ENCODE measurements at regions of chr14 and their contacts with region 1.

Region 1: GRCh38 chr14:77212943-77213678 is 31.5 kb downstream of the TMEM63C start:
- DNase-seq: no peak
- H3K4me3 ChIP-seq: no peak overlapping the region
- CTCF ChIP-seq: no peak
- POLR2A ChIP-seq: no peak

Region 2: DNA sequence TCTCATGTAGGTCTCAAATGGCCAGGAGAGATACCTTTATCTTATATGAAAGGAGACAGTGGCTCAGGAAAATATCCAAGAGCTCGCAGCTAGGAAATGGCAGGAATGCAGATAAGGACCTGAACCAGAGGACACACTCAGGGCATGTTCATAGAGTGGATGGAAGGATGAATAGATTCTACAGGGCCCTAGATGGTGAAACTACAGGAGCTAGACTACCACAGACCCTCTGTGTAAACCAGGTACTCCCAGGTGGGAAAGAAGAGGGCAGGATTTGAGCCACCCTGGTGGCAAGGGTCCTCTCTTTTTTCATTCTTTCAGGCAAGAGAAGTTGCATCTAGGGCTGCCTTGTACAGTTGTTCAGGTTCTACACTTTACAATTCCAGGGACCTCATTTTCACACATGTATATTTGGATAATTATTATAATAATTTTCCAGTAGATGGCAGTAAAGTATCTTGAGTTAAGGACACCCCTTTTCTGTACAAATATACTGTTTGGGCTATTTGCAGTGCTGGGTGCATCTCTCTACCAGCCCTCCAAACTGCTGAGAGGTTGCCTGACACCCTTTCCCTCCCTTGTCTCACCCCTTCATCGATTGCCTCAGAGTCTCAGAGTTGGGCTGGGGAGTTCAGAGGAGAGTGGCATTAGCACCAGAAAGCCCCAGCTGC is 61.1 kb before region 1 on chr14:
- intact Hi-C with region 1: loop called (anchors 10 kb)
- DNase-seq: no peak
- H3K4me3 ChIP-seq: no peak overlapping the region
- CTCF ChIP-seq: no peak
- POLR2A ChIP-seq: no peak

Region 3: GRCh38 chr14:78029601-78030372 is 816.7 kb after region 1 on chr14:
- intact Hi-C with region 1: no loop called
- DNase-seq: no peak
- H3K4me3 ChIP-seq: no peak overlapping the region
- CTCF ChIP-seq: no peak
- POLR2A ChIP-seq: no peak